ENCODE measurements at regions of chr7 and their contacts with region 1.

Region 1: DNA sequence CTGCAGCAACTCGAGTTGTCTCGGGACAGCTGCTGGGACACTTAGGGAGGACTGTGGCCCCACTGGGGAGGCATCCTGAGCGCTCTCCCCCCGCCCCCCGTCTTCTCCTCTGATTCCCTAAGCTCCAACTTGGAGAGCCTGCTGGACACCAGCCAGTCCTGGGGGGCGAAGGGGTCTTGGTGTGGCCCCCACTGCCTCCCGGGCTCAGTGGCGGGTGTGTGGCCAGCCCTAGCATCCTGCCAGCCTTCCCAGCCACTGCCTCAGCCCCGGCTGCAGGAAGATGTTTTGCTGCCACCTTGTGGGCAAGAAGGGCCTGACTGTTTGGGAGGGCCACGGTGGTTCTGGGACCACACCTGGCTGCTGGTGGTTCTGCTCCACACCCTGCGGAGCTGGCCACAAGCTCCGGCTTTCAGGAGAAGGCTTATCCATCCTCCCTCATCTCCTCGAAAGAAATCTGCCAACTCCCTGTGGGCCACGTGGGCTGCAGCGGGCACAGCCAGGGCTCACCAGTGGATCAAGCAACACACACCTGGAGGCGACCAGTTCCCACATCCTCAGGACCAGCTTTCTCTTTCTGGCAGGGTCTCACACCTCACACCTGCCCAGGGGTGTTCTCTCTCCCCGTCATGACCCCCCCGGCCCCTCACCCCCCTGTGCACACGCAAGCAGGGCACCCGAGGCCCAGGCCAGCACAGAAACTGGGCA is 24.8 kb downstream of the AGAP3 start:
- DNase-seq: peak; percentile 72
- H3K4me3 ChIP-seq: no peak overlapping the region
- H3K27ac ChIP-seq: no peak overlapping the region
- H3K4me1 ChIP-seq: peaks cover 21% of the 10 kb centered on the region
- H3K27me3 ChIP-seq: no peaks in the 10 kb centered on the region
- CTCF ChIP-seq: peak; percentile 84

Region 2: GRCh38 chr7:150898475-150899011 is 212.6 kb before region 1 on chr7:
- CTCF ChIA-PET with region 1: no interaction called
- POLR2A ChIA-PET with region 1: no interaction called
- intact Hi-C with region 1: loop called (anchors 10 kb)
- DNase-seq: peak; percentile 72
- H3K4me3 ChIP-seq: no peak overlapping the region
- H3K27ac ChIP-seq: no peak overlapping the region
- H3K4me1 ChIP-seq: peaks cover 6% of the 10 kb centered on the region
- H3K27me3 ChIP-seq: no peaks in the 10 kb centered on the region
- CTCF ChIP-seq: peak; percentile 98

Region 3: GRCh38 chr7:151013713-151014497 is 97.2 kb before region 1 on chr7:
- CTCF ChIA-PET with region 1: no interaction called
- POLR2A ChIA-PET with region 1: no interaction called
- intact Hi-C with region 1: loop called (anchors 5 kb)
- DNase-seq: peak; percentile 84
- H3K4me3 ChIP-seq: peak overlapping the region; percentile 23
- H3K27ac ChIP-seq: no peak overlapping the region
- H3K4me1 ChIP-seq: peaks cover 25% of the 10 kb centered on the region
- H3K27me3 ChIP-seq: no peaks in the 10 kb centered on the region
- CTCF ChIP-seq: peak; percentile 26; the same call in 1 of the 2 replicates